ENCODE measurements at regions of chr7 and their contacts with region 1.

Region 1: DNA sequence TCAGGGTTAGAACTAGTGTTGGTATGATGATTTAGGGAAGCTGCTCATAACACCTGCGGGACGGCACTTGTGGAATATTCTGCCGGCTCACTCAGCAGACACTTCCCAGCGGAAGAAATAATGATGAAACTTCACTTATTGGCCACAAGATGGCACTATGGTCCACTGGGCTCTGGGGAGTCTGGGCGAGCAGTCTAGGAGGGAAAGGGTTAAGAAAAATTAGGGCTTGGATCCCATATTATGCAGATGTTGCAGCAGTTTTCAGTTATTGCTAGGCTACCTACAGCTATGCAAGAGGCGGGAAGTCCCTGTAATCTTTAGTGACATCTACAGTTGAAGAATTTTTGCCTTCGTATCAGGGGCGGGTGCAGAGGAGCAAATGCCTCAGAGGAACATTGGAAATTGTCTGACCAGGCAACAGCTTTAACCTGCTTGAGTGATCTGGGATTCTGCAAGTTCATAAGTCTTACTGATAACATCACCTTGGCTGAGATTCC is 238.7 kb upstream of the PRSS58 start:
- DNase-seq: no peak
- ATAC-seq: peak; percentile 90
- H3K4me3 ChIP-seq: no peak overlapping the region
- H3K27ac ChIP-seq: no peak overlapping the region
- H3K4me1 ChIP-seq: no peaks in the 10 kb centered on the region
- H3K27me3 ChIP-seq: no peaks in the 10 kb centered on the region
- CTCF ChIP-seq: peak; percentile 58 to 70 (median 67)
- EP300 ChIP-seq: no peak
- POLR2A ChIP-seq: no peak
- RAD21 ChIP-seq: peak; percentile 44

Region 2: GRCh38 chr7:142077762-142078161 is 418.8 kb before region 1 on chr7:
- CTCF ChIA-PET with region 1: no interaction called
- POLR2A ChIA-PET with region 1: no interaction called
- RAD21 ChIA-PET with region 1: no interaction called
- SMC1A ChIA-PET with region 1: no interaction called
- in situ Hi-C with region 1: no loop called
- intact Hi-C with region 1: no loop called
- DNase-seq: no peak
- ATAC-seq: no peak
- H3K4me3 ChIP-seq: no peak overlapping the region
- H3K27ac ChIP-seq: no peak overlapping the region
- H3K4me1 ChIP-seq: no peaks in the 10 kb centered on the region
- H3K27me3 ChIP-seq: no peaks in the 10 kb centered on the region
- CTCF ChIP-seq: no peak
- EP300 ChIP-seq: no peak
- POLR2A ChIP-seq: no peak
- RAD21 ChIP-seq: no peak

Region 3: DNA sequence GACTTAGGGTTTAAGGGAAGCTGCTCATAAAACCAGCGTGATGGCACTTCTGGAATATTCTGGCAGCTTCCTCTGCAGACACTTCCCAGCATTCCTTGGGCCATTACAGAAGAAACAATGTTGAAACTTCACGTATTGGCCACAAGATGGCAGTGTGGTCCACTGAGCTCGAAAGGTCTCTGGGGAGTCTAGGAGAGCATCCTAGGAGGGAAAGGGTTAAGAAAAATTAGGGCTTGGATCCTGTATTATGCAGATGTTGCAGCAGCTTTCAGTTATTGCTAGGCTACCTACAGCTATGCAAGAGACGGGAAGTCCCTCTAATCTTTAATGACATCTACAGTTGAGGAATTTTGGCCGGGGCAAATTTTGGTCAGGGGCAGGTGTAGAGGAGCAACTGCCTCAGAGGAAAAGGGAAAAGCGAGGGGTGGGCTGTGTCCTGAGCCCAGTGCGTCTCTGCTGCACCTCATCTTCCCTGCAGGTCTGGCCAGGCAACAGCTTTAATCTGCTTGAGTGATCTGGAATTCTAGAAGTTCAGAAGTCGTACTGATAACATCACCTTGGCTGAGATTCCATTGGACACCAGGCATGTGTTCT is 18.0 kb before region 1 on chr7:
- CTCF ChIA-PET with region 1: interaction called, 120 read pairs
- POLR2A ChIA-PET with region 1: no interaction called
- RAD21 ChIA-PET with region 1: interaction called, 4 read pairs
- SMC1A ChIA-PET with region 1: interaction called, 6 read pairs
- in situ Hi-C with region 1: no loop called
- intact Hi-C with region 1: no loop called
- DNase-seq: no peak
- ATAC-seq: peak; percentile 87
- H3K4me3 ChIP-seq: no peak overlapping the region
- H3K27ac ChIP-seq: no peak overlapping the region
- H3K4me1 ChIP-seq: no peaks in the 10 kb centered on the region; the same call in 1 of the 2 replicates
- H3K27me3 ChIP-seq: no peaks in the 10 kb centered on the region
- CTCF ChIP-seq: peak; percentile 46 to 59 (median 57)
- EP300 ChIP-seq: no peak; a peak in 1 of 4 replicates
- POLR2A ChIP-seq: no peak
- RAD21 ChIP-seq: peak; percentile 24; the same call in 1 of the 2 replicates

Region 4: GRCh38 chr7:142508258-142508689 is 11.7 kb after region 1 on chr7:
- CTCF ChIA-PET with region 1: interaction called, 59 read pairs
- POLR2A ChIA-PET with region 1: no interaction called
- RAD21 ChIA-PET with region 1: no interaction called
- SMC1A ChIA-PET with region 1: no interaction called
- in situ Hi-C with region 1: no loop called
- intact Hi-C with region 1: no loop called
- DNase-seq: no peak
- ATAC-seq: no peak
- H3K4me3 ChIP-seq: no peak overlapping the region
- H3K27ac ChIP-seq: no peak overlapping the region
- H3K4me1 ChIP-seq: no peaks in the 10 kb centered on the region
- H3K27me3 ChIP-seq: peaks cover 0 to 1% of the 10 kb centered on the region in 2 experiments; a peak in 2 of 4 replicates
- CTCF ChIP-seq: no peak
- EP300 ChIP-seq: no peak
- POLR2A ChIP-seq: no peak
- RAD21 ChIP-seq: no peak

Region 5: GRCh38 chr7:142516038-142516501 is 19.5 kb after region 1 on chr7:
- CTCF ChIA-PET with region 1: interaction called, 59 read pairs
- POLR2A ChIA-PET with region 1: no interaction called
- RAD21 ChIA-PET with region 1: no interaction called
- SMC1A ChIA-PET with region 1: no interaction called
- in situ Hi-C with region 1: no loop called
- intact Hi-C with region 1: no loop called
- DNase-seq: peak; percentile 17
- ATAC-seq: peak; percentile 96
- H3K4me3 ChIP-seq: no peak overlapping the region
- H3K27ac ChIP-seq: no peak overlapping the region
- H3K4me1 ChIP-seq: no peaks in the 10 kb centered on the region
- H3K27me3 ChIP-seq: no peaks in the 10 kb centered on the region
- CTCF ChIP-seq: peak; percentile 73 to 80 (median 76)
- EP300 ChIP-seq: no peak
- POLR2A ChIP-seq: no peak
- RAD21 ChIP-seq: peak; percentile 60

Region 6: DNA sequence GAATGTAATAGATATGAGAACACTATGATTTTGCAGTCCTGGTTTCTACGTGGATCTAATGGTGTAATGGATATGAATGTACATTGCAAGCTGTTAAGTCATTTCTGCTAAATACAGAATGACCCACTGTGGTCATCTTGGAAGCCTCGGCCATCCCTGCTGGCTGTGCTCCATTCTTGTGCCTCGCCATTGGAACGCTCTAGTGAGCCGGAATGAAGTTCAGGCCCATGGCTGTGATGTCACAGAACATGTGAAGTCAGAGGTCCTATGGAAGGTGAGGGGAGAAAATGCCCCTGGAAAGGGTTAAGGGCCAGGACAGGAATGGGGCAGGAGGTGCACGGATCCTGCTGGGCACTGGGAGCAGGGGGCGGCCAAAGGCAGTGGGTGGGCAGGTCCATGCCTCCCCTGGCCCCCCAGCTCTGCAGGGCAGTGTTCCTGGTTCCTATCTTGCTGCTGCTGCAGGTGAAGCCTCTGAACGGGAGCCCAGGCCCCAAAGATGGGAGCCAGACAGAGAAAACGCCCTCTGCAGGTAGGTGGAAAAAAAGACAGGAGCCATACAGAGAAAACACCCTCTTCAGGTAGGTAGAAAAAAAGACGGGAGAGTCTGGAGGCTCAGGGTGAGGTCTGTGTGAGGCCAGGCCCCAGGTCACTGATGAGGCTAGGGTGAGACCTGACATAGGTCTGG is 442.8 kb after region 1 on chr7 and contains the start of gene LLCFC1:
- CTCF ChIA-PET with region 1: no interaction called
- POLR2A ChIA-PET with region 1: no interaction called
- RAD21 ChIA-PET with region 1: no interaction called
- SMC1A ChIA-PET with region 1: no interaction called
- in situ Hi-C with region 1: no loop called
- intact Hi-C with region 1: no loop called
- DNase-seq: no peak
- ATAC-seq: peak; percentile 65
- H3K4me3 ChIP-seq: no peak within 1 kb of the TSS
- H3K27ac ChIP-seq: no peak within 1 kb of the TSS
- H3K4me1 ChIP-seq: no peaks in the 10 kb centered on the region
- H3K27me3 ChIP-seq: no peaks in the 10 kb centered on the region; a peak in 1 of 4 replicates
- CTCF ChIP-seq: peak; percentile 25 to 37 (median 26); a peak in 4 of 6 replicates
- EP300 ChIP-seq: no peak
- POLR2A ChIP-seq: no peak
- RAD21 ChIP-seq: peak; percentile 21; the same call in 1 of the 2 replicates
- polyA plus RNA-seq, gene LLCFC1: not detected

Measured in GM12878 (cell line).